Activated CD4-positive, alpha-beta memory T cell treated with anti-CD3 and anti-CD28 coated beads for 36 hours (primary cell): ENCODE measurements at regions of chr10 and their contacts with region 1.

Region 1: DNA sequence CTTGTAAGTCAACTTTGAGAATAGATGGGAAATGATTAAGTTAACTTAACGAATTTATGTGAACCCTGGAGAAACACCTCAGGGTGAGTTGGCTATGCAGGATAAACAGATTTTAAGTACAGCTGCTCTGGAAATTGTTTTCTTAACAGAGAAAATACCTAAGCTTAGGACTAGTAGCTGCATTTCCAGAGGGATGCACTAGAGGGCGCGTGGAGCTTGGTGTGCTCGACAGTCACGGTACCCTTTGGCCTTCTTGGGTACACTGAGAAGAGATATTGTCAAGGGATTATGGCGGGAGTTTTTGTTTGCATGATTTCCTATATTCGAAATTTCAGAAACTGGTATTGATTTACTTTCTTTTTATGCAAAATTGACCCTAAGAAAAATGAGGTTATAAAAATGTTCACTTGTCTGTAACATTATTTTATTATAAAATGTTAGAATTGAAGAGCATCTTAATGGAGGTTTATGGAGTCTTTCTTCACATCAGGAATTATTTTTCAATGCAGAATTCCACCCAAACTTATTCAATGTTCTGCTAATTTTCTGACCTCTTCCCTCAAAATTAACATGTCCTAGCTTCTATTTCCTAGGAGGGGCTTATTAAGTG is 58.4 kb upstream of the MYO3A start:
- DNase-seq: peak; percentile 73
- H3K4me3 Mint-ChIP-seq: no peak overlapping the region
- H3K27ac Mint-ChIP-seq: no peak overlapping the region
- H3K4me1 Mint-ChIP-seq: no peaks in the 10 kb centered on the region
- H3K27me3 Mint-ChIP-seq: peaks cover 2% of the 10 kb centered on the region

Region 2: DNA sequence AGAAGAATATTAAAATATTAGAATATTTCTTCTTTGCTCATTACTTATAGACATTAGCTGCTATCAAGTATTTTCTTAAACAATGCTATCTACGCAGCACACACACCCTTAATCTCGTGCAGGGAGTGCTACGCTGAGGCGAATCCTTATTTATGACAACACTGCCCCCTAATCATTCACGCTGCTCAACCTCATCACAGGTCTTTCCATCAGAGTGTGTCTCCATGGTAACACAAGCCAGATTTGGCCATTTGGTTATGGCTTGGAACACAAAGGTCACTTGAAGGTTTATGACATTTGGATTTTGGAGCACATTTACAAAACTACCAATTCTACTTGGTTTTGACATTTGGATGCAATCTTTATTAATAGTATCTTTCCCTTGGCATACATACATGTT is 13.0 kb after region 1 on chr10:
- CTCF ChIA-PET with region 1: interaction called, 10 read pairs
- POLR2A ChIA-PET with region 1: no interaction called
- intact Hi-C with region 1: no loop called
- DNase-seq: no peak
- H3K4me3 Mint-ChIP-seq: no peak overlapping the region
- H3K27ac Mint-ChIP-seq: no peak overlapping the region
- H3K4me1 Mint-ChIP-seq: no peaks in the 10 kb centered on the region
- H3K27me3 Mint-ChIP-seq: no peaks in the 10 kb centered on the region

Region 3: GRCh38 chr10:26269754-26270153 is 394.1 kb after region 1 on chr10:
- CTCF ChIA-PET with region 1: interaction called, 11 read pairs
- POLR2A ChIA-PET with region 1: no interaction called
- intact Hi-C with region 1: loop called (anchors 1 kb)
- DNase-seq: no peak
- H3K4me3 Mint-ChIP-seq: no peak overlapping the region
- H3K27ac Mint-ChIP-seq: no peak overlapping the region
- H3K4me1 Mint-ChIP-seq: no peaks in the 10 kb centered on the region
- H3K27me3 Mint-ChIP-seq: peaks cover 13% of the 10 kb centered on the region

Region 4: DNA sequence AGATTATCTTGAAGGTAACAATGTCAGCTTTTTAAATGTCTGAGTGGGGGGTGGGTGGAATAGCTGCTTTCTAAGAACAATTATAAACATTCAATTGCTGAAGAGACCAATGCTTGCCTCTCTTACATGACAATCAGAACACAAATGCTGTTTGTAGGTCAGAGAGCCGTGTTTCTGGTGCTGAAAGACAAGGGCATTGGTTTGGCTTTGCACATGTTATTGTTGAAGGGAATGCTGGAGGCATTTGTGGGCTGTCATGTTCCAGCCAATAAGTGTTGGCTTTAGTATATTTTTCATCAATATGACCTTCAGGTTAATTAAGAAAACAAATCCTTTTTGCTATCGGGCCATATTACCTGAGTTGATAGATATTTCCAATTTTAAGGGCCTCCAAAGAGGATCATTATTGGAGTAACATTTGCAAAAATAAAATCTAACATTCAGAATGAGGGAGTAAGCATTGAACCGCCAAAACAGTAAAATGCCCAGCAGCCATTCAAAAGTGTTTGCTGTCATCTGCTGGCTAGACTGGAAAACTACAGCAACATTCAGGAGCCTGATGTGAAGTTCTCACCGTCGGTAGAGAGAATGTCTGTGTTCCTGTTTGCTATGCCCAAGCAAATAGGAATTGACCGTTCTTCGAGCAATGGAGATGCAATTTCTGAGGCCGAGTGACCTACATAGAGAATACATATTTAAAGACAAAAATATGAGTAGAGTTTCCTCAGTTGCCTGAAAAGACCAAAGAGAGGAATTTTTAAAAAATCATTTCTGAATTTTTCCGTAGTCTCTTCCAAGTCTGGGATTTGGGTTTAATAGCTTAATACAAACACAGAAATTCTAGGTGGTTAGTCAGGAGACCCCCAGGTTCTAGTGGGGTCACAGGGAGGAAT is 681.3 kb after region 1 on chr10:
- CTCF ChIA-PET with region 1: interaction called, 4 read pairs
- POLR2A ChIA-PET with region 1: no interaction called
- intact Hi-C with region 1: loop called (anchors 5 kb)
- DNase-seq: peak; percentile 37
- H3K4me3 Mint-ChIP-seq: no peak overlapping the region
- H3K27ac Mint-ChIP-seq: no peak overlapping the region
- H3K4me1 Mint-ChIP-seq: no peaks in the 10 kb centered on the region
- H3K27me3 Mint-ChIP-seq: no peaks in the 10 kb centered on the region